Activated T-helper 1 cell treated with anti-CD3 and anti-CD28 coated beads, Interleukin-12 subunit alpha, Interleukin-12 subunit beta, Interleukin-2, Interleukin-4 antibody, amounts not matched to agents 30 ng/mL and 10 ng/mL and 1 ng/mL, durations not matched to agents 14 hours and 24 hours and 36 hours (primary cell): ENCODE measurements at regions of chr3 and their contacts with region 1.

Region 1: GRCh38 chr3:141738022-141738890 is at the start of gene RNF7:
- DNase-seq: peak; percentile 97
- H3K4me3 Mint-ChIP-seq: peak within 1 kb of the TSS; percentile 100
- H3K27ac Mint-ChIP-seq: peak within 1 kb of the TSS; percentile 99
- H3K4me1 Mint-ChIP-seq: peaks cover 30% of the 10 kb centered on the region
- H3K27me3 Mint-ChIP-seq: peaks cover 5% of the 10 kb centered on the region
- total RNA-seq, gene RNF7: 70.5 and 70.9 TPM in 2 replicates

Region 2: DNA sequence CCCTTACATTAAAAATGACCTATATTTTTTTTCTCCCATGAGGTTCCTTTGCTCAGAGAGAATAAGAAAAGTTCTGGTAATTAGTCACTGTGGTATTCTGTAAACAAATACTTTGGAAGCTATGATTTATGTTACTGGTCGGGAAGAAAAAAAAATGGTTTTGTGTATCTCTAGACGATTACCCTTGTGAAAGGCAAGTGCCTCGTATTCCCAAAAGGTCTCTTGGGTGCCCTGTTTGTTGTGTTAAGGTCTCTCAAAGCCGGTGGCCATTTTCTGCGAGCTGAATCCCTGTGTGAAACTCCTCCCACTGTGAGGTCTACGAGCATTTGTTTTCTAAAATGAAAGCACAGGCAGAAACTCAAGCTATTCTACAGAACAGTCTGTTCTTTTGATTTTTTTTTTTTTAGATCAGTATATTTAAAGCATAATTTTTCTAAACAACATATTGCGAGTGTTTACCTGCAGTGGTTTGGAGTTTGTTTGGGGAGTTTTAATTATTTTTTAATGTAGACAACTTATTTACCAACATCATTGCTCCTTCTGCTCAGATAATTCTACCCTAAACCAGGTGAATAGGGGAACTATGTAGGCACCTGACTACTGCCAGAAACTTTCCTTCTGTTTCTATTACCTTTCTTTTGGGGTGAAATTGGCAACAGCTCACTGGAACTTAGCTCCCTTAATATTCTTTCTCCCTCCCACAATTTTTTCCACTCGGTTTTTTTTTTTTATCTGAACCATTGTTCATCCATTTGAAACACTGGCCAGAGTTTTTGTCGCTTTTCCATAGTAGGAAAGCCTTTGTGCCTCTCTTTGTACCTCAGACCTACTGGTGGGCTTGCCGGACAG is 325.9 kb before region 1 on chr3:
- intact Hi-C with region 1: loop called (anchors 1 kb)
- DNase-seq: peak; percentile 55
- H3K4me3 Mint-ChIP-seq: peak overlapping the region; percentile 85
- H3K27ac Mint-ChIP-seq: peak overlapping the region; percentile 98
- H3K4me1 Mint-ChIP-seq: peaks cover 61% of the 10 kb centered on the region
- H3K27me3 Mint-ChIP-seq: no peaks in the 10 kb centered on the region

Region 3: DNA sequence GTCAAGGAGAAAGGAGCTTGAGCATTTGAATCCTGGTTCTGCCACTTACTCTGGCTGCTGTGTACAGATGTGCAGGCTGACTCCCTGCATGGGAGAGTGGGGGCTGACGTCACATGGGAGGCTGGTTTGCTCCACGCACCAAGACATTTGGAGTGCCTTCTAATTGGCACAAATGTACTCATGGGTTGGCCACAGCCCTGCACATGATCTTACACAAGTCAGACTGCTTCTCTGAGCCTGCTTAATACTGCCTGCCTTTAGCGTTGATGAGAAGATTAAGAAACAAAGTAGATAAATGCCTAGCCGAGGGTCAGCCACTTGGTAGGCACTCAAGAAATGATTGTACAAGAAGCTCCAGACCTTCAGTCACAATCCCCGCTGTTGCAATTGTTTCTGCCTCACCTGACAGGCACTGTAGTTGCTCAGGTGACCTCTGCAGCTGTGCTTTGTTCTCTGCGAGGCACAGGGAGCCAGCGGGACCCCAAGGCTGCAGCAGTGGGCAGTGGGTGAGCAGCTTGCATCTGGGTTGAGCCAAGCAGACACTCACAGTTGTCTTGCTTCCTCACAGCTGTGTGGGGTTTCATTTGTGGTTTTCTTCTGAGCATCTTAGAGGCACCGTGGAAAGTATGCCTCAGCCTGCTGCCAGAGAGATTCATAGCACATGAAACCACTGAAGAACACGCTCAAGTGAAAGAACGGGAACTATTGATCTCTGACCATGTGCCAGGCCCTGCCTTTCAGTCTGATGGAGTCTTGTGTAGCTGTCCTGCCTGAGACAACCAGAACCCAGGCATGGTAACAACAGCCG is 58.0 kb after region 1 on chr3:
- intact Hi-C with region 1: loop called (anchors 1 kb)
- DNase-seq: peak; percentile 74
- H3K4me3 Mint-ChIP-seq: peak overlapping the region; percentile 79
- H3K27ac Mint-ChIP-seq: peak overlapping the region; percentile 99
- H3K4me1 Mint-ChIP-seq: peaks cover 47% of the 10 kb centered on the region
- H3K27me3 Mint-ChIP-seq: peaks cover 3% of the 10 kb centered on the region

Region 4: GRCh38 chr3:141998669-141999290 is 260.5 kb after region 1 on chr3:
- intact Hi-C with region 1: loop called (anchors 1 kb)
- DNase-seq: no peak
- H3K4me3 Mint-ChIP-seq: no peak overlapping the region
- H3K27ac Mint-ChIP-seq: no peak overlapping the region
- H3K4me1 Mint-ChIP-seq: no peaks in the 10 kb centered on the region
- H3K27me3 Mint-ChIP-seq: no peaks in the 10 kb centered on the region

Region 5: DNA sequence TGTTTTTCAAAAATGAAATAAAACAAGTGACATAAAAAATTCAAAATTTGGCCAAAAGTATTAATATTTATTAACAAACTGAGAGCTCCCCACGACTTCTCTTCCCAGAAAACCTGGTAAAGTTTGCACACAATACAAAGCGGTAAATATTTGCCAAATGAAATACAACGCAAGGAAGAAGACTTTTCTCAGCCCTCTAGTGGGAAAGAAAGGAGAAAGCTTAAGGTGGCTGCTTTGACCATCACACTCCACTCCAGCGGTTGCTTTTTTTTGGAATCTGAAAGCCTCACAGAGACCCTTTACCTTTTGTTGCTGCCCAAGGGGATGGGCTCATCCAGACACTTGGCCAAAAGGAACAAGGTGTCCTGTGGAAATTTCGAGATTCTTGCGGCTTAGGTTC is 488.2 kb after region 1 on chr3:
- intact Hi-C with region 1: loop called (anchors 2 kb)
- DNase-seq: no peak
- H3K4me3 Mint-ChIP-seq: peak overlapping the region; percentile 72
- H3K27ac Mint-ChIP-seq: no peak overlapping the region
- H3K4me1 Mint-ChIP-seq: peaks cover 20% of the 10 kb centered on the region
- H3K27me3 Mint-ChIP-seq: no peaks in the 10 kb centered on the region

Region 6: DNA sequence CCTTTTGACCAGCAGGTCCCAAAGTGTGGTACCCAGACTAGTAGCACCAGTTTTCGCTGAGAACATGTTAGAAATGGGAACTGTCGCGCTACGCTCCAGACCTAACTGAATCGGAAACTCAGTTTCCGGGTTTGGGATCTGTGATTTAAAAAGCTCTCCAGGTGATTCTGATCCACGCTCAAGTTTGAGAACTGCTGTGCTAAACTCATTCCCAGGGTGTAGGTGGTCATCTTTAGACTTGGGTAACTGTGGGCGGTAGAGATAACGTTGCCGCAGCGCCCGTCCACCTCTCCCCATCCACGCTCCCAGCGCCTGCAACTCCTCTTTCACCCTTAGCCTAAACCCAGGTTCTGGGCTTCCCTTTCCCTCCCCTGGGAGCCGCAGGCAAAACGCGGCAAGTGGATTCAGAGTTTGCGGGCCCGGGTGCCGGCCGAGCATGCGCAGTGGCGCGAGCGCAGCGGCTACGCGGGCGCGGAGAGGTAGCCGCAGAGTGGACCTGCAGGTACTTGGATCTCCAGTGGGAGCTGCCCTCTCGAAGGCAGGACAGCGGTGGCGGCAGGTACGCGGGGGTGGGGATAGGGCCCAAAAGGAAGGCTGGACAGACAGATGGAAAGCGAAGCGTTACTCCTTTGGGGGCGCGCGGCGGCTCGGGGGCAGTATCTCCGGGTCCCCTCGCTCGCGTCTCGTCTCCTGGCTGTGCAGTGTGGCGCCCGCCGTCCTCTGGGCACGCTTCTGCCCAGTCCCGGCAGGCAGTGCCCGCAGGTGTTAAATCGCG is 857.9 kb after region 1 on chr3 and contains the start of gene PLS1:
- intact Hi-C with region 1: loop called (anchors 1 kb)
- DNase-seq: peak; percentile 89
- H3K4me3 Mint-ChIP-seq: peak within 1 kb of the TSS; percentile 95
- H3K27ac Mint-ChIP-seq: peak within 1 kb of the TSS; percentile 69
- H3K4me1 Mint-ChIP-seq: peaks cover 25% of the 10 kb centered on the region
- H3K27me3 Mint-ChIP-seq: peaks cover 4% of the 10 kb centered on the region
- total RNA-seq, gene PLS1: 4.4 and 4.8 TPM in 2 replicates